Mammary epithelial cell (primary cell): ENCODE measurements at regions of chr7 and their contacts with region 1.

Region 1: GRCh38 chr7:25663877-25664276 is 435.6 kb upstream of the NPVF start:
- DNase-seq: no peak
- H3K4me3 ChIP-seq: no peak overlapping the region
- H3K27ac ChIP-seq: no peak overlapping the region
- H3K4me1 ChIP-seq: no peaks in the 10 kb centered on the region
- H3K27me3 ChIP-seq: peaks cover 3% of the 10 kb centered on the region
- CTCF ChIP-seq: no peak

Region 2: DNA sequence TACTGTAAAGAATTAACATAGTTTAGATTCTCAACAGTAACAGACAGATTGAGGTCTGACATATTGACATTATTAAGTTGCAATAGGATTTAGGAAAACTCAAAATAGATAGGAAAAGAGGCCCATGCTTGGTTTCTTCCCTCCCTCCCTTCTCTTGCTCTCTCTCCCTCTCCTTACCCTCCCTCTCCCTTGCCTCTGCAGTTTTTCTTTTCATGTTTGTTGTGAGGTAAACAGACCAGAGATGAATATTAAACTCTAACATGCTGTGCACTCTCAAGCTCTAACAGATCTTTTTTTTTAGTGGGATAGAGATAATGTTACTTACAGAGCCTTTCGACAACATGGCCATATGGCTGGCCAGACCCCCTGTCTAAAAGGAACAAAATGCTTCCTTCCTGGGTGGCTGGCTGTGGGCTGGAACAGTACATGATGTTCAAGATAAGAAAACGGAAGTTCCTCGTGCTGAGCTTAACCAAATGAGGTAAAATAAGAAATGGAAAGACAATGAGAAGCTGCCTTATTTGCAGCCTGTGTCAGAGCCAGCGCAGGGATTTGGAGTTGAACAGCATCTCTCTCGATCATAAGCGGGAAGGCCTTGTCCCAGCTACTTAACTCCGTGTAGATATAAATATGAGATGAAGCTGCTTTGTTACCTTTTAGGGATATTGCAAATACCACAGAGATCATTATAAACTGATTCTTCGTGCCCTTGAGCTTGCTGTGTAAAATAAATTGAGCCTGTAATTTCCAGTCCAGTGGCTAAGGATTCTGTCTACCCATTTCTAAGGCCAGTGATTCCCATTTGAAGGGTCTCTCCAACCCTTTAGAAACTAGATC is 43.7 kb before region 1 on chr7:
- CTCF ChIA-PET with region 1: no interaction called
- dilution Hi-C with region 1: loop called (anchors 5 kb)
- in situ Hi-C with region 1: no loop called
- intact Hi-C with region 1: no loop called
- DNase-seq: no peak
- H3K4me3 ChIP-seq: no peak overlapping the region
- H3K27ac ChIP-seq: no peak overlapping the region
- H3K4me1 ChIP-seq: no peaks in the 10 kb centered on the region
- H3K27me3 ChIP-seq: peaks cover 2% of the 10 kb centered on the region
- CTCF ChIP-seq: no peak

Region 3: GRCh38 chr7:25789701-25790640 is 126.1 kb after region 1 on chr7:
- CTCF ChIA-PET with region 1: no interaction called
- dilution Hi-C with region 1: no loop called
- in situ Hi-C with region 1: no loop called
- intact Hi-C with region 1: no loop called
- DNase-seq: no peak
- H3K4me3 ChIP-seq: no peak overlapping the region
- H3K27ac ChIP-seq: no peak overlapping the region
- H3K4me1 ChIP-seq: no peaks in the 10 kb centered on the region
- H3K27me3 ChIP-seq: no peaks in the 10 kb centered on the region
- CTCF ChIP-seq: no peak

Region 4: DNA sequence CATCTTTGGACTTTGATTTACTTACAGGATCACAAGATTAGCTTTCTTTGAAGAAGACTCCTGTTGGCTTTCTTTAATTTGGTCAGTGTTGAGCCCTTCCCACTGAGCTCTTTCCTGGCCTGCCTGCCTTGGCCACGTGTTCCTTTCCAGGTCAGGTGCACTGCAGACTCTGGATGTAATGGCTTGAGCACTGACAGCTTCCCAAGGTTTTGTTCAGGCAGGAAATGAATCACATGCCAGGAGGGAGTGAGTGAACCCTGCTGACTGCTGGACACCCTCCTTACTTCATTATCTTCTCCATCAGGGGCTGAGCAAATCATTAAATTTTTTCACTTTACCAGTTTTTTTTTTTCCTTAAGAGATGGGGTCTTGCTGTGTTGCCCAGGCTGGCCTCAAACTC is 657.6 kb after region 1 on chr7:
- CTCF ChIA-PET with region 1: no interaction called
- dilution Hi-C with region 1: no loop called
- in situ Hi-C with region 1: no loop called
- intact Hi-C with region 1: no loop called
- DNase-seq: peak; percentile 59
- H3K4me3 ChIP-seq: no peak overlapping the region
- H3K27ac ChIP-seq: no peak overlapping the region
- H3K4me1 ChIP-seq: peaks cover 15% of the 10 kb centered on the region
- H3K27me3 ChIP-seq: no peaks in the 10 kb centered on the region
- CTCF ChIP-seq: no peak